HEK293 (cell line): ENCODE measurements at regions of chr22 and their contacts with region 1.

Region 1: DNA sequence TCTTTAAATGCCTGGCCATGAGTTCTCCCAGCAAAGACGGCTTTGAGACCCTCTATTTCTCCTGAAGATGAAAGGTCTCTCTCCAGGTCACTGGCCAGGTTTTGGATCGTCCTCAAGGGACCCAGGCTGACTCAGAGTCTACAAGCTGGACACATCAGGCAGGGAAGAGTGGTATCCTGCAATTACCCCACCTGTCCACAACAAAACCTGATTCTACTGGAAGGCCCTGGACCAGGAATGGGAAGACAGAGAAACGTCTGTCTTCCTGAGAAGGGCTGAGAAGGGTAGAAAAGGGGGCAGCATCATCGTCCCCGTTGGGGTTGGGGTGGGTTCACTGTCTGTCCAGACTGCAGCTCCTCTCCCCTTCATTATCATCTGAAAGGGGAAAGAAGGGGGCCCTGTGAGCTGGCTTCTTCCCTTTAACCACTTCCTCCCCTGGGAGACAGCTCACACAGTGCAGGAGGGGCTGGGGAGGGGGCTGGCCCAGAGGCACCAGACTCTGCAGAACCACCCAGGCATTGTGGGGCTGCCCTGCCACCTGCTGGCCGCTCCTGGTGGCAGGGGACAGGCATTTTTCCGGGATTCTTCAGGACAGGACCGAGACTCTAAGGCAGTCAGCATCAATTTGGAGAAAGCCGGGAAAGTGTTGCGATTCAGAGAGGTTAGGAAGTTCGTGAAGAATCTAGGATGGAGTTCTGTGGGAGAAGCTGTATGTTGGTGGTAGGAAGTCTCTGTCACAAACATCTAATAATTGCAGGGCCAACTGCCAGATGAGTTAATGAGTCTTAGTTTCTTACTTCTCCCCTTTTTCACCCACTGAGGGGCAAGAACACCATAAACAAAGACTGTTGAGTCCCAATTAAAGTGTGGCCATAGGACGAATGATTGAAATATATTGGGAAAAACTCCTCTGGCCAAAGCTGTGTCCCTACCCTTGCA is 57.6 kb downstream of the SYN3 start:
- H3K4me3 ChIP-seq: no peak overlapping the region
- H3K27ac ChIP-seq: no peak overlapping the region
- H3K4me1 ChIP-seq: no peaks in the 10 kb centered on the region
- CTCF ChIP-seq: peak; percentile 76

Region 2: GRCh38 chr22:33104147-33104854 is 103.7 kb after region 1 on chr22:
- CTCF ChIA-PET with region 1: no interaction called
- POLR2A ChIA-PET with region 1: no interaction called
- H3K4me3 ChIP-seq: no peak overlapping the region
- H3K27ac ChIP-seq: no peak overlapping the region
- H3K4me1 ChIP-seq: peaks cover 4% of the 10 kb centered on the region
- CTCF ChIP-seq: no peak

Region 3: DNA sequence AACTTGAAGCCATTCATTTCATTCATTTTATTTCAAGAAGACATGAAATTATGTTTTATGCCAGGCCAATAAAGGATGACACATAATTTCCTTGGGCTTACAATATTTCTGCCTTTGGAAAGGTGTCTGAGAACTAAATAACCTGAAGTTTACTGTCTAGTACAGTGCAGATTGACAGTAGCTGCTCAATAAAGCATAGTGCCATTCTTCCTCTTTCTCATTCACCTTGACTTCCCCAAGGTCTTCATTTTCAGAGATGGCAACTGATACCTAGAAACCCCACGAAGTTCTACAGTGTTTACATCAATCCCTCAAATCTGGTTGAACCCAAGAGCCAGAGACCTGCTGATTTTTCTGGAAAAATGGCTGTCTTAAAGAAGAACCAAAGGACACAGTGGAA is 201.8 kb after region 1 on chr22:
- CTCF ChIA-PET with region 1: interaction called, 11 read pairs
- POLR2A ChIA-PET with region 1: no interaction called
- H3K4me3 ChIP-seq: no peak overlapping the region
- H3K27ac ChIP-seq: no peak overlapping the region
- H3K4me1 ChIP-seq: no peaks in the 10 kb centered on the region
- CTCF ChIP-seq: no peak

Region 4: DNA sequence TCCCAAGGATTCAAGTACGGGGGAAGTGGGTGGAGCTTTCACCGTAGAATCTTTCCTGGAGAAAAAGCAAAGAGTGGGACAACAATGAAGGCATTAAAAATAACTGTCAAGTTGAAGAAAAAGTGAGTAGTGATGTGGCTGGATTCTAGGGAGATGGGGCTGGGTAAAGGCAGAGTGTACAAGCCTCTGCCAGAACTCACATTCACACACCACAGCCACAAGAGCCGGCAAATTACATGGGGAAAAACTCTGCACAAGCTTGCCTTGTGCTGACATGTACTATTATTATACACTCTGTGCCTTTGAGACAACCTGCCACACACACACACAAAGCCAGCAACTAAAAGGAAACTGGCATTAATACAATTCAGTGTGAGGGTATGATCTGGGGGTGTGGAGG is 737.1 kb after region 1 on chr22:
- CTCF ChIA-PET with region 1: no interaction called
- POLR2A ChIA-PET with region 1: no interaction called
- H3K4me3 ChIP-seq: no peak overlapping the region
- H3K27ac ChIP-seq: no peak overlapping the region
- H3K4me1 ChIP-seq: no peaks in the 10 kb centered on the region
- CTCF ChIP-seq: no peak